Sciatic nerve (tissue), 2 donors: ENCODE measurements at regions of chr3 and their contacts with region 1.

Region 1: GRCh38 chr3:94500146-94500545 is 437.3 kb downstream of the NSUN3 start:
- DNase-seq: no peak
- ATAC-seq: no peak

Region 2: GRCh38 chr3:94453864-94454263 is 46.3 kb before region 1 on chr3:
- intact Hi-C with region 1: loop called (anchors 2 kb)
- DNase-seq: no peak
- ATAC-seq: no peak

Region 3: GRCh38 chr3:96022676-96023075 is 1522.5 kb after region 1 on chr3:
- intact Hi-C with region 1: no loop called
- DNase-seq: no peak
- ATAC-seq: no peak